ENCODE measurements at regions of chr7 and their contacts with region 1.

Region 1: GRCh38 chr7:3897438-3898385 is 596.7 kb downstream of the SDK1 start:
- DNase-seq: peak; percentile 61
- ATAC-seq: peak; percentile 69
- H3K4me3 ChIP-seq: no peak overlapping the region
- H3K27ac ChIP-seq: no peak overlapping the region
- H3K4me1 ChIP-seq: no peaks in the 10 kb centered on the region
- H3K27me3 ChIP-seq: no peaks in the 10 kb centered on the region
- CTCF ChIP-seq: peak; percentile 89

Region 2: GRCh38 chr7:3544202-3544601 is 353.5 kb before region 1 on chr7:
- CTCF ChIA-PET with region 1: no interaction called
- POLR2A ChIA-PET with region 1: no interaction called
- intact Hi-C with region 1: no loop called
- DNase-seq: no peak
- ATAC-seq: no peak
- H3K4me3 ChIP-seq: no peak overlapping the region
- H3K27ac ChIP-seq: no peak overlapping the region
- H3K4me1 ChIP-seq: no peaks in the 10 kb centered on the region
- H3K27me3 ChIP-seq: no peaks in the 10 kb centered on the region
- CTCF ChIP-seq: peak; percentile 30; the same call in 1 of the 2 replicates

Region 3: DNA sequence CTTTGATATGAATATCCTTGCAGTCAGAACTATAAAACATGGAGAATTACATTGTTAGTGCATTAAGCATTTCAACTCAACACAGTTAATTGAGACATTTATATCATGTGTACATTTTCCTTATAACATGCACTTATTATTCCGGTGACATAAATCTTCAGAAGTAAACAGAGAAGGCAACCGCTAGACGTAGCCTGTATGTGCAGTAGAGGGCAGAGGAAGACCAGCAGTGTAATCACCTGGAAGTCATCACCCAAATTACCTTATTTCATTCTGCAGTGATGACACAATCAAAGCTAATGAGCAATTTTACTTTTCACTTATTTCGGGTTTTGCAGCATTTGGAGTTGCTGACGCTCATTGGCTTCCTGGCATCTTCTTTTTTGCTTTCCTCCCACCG is 202.1 kb before region 1 on chr7:
- CTCF ChIA-PET with region 1: no interaction called
- POLR2A ChIA-PET with region 1: no interaction called
- intact Hi-C with region 1: loop called (anchors 1 kb)
- DNase-seq: peak; percentile 38
- ATAC-seq: peak; percentile 90
- H3K4me3 ChIP-seq: no peak overlapping the region
- H3K27ac ChIP-seq: no peak overlapping the region
- H3K4me1 ChIP-seq: no peaks in the 10 kb centered on the region
- H3K27me3 ChIP-seq: no peaks in the 10 kb centered on the region
- CTCF ChIP-seq: peak; percentile 77

Region 4: GRCh38 chr7:3861941-3862340 is 35.8 kb before region 1 on chr7:
- CTCF ChIA-PET with region 1: no interaction called
- POLR2A ChIA-PET with region 1: no interaction called
- intact Hi-C with region 1: no loop called
- DNase-seq: no peak
- ATAC-seq: no peak
- H3K4me3 ChIP-seq: no peak overlapping the region
- H3K27ac ChIP-seq: no peak overlapping the region
- H3K4me1 ChIP-seq: no peaks in the 10 kb centered on the region
- H3K27me3 ChIP-seq: no peaks in the 10 kb centered on the region
- CTCF ChIP-seq: no peak

Region 5: DNA sequence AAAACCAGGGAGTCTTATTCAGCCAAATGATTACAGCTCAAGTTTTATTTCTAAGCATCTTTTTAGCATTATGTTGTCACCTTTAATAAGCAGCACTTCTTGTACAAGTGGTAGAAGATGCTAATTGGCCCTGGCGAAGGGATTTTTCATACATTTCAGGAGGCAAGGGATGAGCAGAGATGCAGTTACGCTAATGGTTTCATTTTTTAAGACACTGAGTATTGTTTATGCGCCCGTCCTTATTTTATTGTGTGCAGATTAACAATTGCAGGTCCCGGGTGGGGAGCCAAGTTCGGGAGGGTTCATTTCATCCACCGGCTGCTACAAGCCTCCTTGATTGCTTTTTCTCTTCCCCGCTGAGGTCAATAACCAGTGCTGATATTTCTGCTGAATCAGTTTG is 434.0 kb after region 1 on chr7:
- CTCF ChIA-PET with region 1: no interaction called
- POLR2A ChIA-PET with region 1: no interaction called
- intact Hi-C with region 1: no loop called
- DNase-seq: no peak
- ATAC-seq: no peak
- H3K4me3 ChIP-seq: no peak overlapping the region
- H3K27ac ChIP-seq: no peak overlapping the region
- H3K4me1 ChIP-seq: no peaks in the 10 kb centered on the region
- H3K27me3 ChIP-seq: no peaks in the 10 kb centered on the region
- CTCF ChIP-seq: no peak